Ovary (tissue), 10 donors: ENCODE measurements at regions of chr15 and their contacts with region 1.

Region 1: DNA sequence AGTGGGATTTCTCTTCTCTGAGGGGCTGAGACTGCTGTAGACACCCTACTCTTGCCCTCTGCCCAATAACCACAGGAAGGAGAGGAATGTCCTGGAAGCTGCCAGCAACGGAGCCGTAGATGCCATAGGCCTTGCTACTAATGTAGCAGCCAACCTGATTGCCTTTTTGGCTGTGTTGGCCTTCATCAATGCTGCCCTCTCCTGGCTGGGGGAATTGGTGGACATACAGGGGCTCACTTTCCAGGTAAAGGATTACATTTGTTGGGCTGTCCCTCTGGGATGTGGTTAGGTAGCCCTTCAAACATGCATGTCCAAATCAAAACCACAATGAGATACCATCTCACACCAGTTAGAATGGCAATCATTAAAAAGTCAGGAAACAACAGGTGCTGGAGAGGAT is 16.1 kb downstream of the SLC28A2 start:
- DNase-seq: no peak
- H3K4me3 ChIP-seq: no peak overlapping the region
- H3K27ac ChIP-seq: no peak overlapping the region
- H3K4me1 ChIP-seq: no peaks in the 10 kb centered on the region
- H3K27me3 ChIP-seq: no peaks in the 10 kb centered on the region
- CTCF ChIP-seq: no peak
- EP300 ChIP-seq: no peak
- POLR2A ChIP-seq: no peak

Region 2: GRCh38 chr15:45212493-45212892 is 55.6 kb before region 1 on chr15:
- intact Hi-C with region 1: loop called in 1 of 4 experiments (anchors 10 kb)
- DNase-seq: no peak
- H3K4me3 ChIP-seq: no peak overlapping the region
- H3K27ac ChIP-seq: no peak overlapping the region
- H3K4me1 ChIP-seq: no peaks in the 10 kb centered on the region
- H3K27me3 ChIP-seq: no peaks in the 10 kb centered on the region
- CTCF ChIP-seq: no peak
- EP300 ChIP-seq: no peak
- POLR2A ChIP-seq: no peak

Region 3: GRCh38 chr15:46654993-46655392 is 1386.9 kb after region 1 on chr15:
- intact Hi-C with region 1: no loop called
- DNase-seq: no peak
- H3K4me3 ChIP-seq: no peak overlapping the region
- H3K27ac ChIP-seq: no peak overlapping the region
- H3K4me1 ChIP-seq: no peaks in the 10 kb centered on the region
- H3K27me3 ChIP-seq: no peaks in the 10 kb centered on the region
- CTCF ChIP-seq: no peak
- EP300 ChIP-seq: no peak
- POLR2A ChIP-seq: no peak